Activated CD8-positive, alpha-beta memory T cell treated with anti-CD3 and anti-CD28 coated beads, Interleukin-2, amount 10 ng/mL, durations not matched to agents 7 days and 5 days (primary cell): ENCODE measurements at regions of chr16 and their contacts with region 1.

Region 1: GRCh38 chr16:66830422-66831404 is at the start of gene NAE1:
- DNase-seq: peak; percentile 90
- ATAC-seq: peak; percentile 96
- H3K4me3 Mint-ChIP-seq: peak within 1 kb of the TSS; percentile 71
- H3K27ac Mint-ChIP-seq: peak within 1 kb of the TSS; percentile 71
- H3K4me1 Mint-ChIP-seq: peaks cover 40% of the 10 kb centered on the region
- H3K27me3 Mint-ChIP-seq: no peaks in the 10 kb centered on the region
- total RNA-seq, gene NAE1: 81.1 to 88.5 TPM

Region 2: DNA sequence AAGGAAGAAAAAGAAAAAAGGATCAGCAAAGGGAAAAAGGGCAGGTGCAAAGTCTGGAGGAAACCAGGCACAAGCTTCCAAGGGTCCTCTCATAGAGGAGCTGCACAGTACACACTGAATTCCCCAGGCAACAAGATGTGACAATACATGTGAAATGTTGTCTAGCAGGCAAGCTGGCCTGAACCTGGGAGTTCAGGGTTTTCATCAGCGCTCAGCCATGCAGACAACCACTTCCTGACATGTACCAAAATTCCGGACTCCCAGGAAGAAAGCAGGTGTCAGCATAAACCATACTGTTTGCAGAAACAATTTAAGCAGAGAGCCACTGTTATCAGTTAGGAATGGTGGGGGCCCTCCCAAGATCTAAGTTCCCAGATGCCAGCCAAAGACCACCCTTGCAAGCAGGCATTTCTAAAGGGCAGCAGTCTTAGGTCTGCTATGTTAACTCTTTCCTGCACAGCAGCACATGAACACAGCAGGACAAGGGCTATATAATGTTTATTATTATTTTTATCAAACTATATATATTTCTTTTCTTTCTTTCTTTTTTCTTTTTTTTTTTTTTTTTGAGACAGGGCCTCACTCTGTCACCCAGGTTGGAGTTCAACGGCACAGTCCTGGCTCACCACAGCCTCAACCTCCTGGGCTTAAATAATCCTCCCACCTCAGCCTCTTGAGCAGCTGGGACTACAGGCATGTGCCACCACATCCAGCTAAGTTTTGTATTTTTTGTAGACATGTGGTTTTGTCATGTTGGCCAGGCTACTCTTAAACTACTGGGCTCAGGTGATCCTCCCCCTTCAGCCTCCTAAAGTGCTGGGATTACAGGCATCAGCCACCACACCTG is 290.9 kb before region 1 on chr16:
- CTCF ChIA-PET with region 1: no interaction called
- DNase-seq: no peak
- ATAC-seq: peak; percentile 54
- H3K4me3 Mint-ChIP-seq: peak overlapping the region; percentile 3
- H3K27ac Mint-ChIP-seq: peak overlapping the region; percentile 63
- H3K4me1 Mint-ChIP-seq: peaks cover 16% of the 10 kb centered on the region
- H3K27me3 Mint-ChIP-seq: no peaks in the 10 kb centered on the region

Region 3: DNA sequence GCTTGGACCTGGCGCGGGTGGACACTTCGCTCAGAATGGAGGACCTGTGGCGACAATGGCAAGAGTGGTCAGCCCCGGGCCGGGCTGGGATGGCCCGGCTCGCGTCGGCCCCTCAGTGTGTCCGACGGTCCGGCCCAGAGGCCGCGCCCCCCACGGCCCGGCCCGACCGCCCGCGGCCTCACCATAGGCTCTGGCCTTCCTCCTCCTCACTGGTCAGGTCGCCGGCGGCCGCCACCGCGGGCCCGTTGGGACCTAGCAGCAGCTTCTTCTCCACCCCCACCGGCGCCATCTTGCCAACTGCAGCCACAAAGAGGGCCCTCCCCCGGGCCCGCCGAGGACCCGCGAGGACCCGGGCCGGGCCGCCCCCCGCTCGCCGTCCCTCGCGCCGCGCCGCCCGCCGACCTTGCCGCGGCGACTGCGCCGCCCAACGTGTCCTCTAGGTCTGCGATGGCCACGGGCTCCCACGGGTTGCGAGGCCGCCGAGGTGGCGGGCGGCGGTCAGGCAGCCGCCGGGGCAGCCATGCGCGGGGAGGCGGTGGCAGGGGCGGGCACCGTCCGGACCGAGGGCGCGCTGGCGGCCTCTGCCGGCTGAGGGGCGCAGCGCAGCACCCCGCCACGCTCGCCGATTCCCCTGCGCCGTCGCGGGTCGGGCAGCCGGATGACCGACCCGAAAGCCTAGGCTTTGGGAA is 79.3 kb before region 1 on chr16 and contains the start of gene DYNC1LI2:
- CTCF ChIA-PET with region 1: interaction called, 22 read pairs
- DNase-seq: peak; percentile 86
- ATAC-seq: peak; percentile 87
- H3K4me3 Mint-ChIP-seq: peak within 1 kb of the TSS; percentile 85
- H3K27ac Mint-ChIP-seq: peak within 1 kb of the TSS; percentile 86
- H3K4me1 Mint-ChIP-seq: peaks cover 46% of the 10 kb centered on the region
- H3K27me3 Mint-ChIP-seq: peaks cover 24% of the 10 kb centered on the region
- total RNA-seq, gene DYNC1LI2: 71.6 to 81.0 TPM

Region 4: DNA sequence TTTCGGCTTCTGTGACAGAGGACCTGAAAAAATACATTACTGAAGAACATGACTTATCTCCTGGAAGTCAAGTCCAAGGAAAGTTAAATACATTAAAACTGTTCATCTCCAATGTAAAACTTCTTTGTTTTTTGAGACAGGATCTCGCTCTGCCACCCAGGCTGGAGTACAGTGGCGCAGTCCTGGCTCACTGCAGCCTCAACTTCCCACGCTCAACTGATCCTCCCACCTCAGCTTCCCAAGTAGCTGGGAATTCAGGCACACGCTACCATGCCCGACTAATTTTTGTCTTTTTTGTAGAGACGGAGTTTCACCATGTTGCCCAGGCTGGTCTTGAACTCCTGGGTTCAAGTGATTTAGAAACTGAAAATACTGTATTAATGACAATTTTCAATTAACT is 19.7 kb before region 1 on chr16:
- CTCF ChIA-PET with region 1: interaction called, 42 read pairs
- DNase-seq: no peak
- ATAC-seq: no peak
- H3K4me3 Mint-ChIP-seq: no peak overlapping the region
- H3K27ac Mint-ChIP-seq: no peak overlapping the region
- H3K4me1 Mint-ChIP-seq: no peaks in the 10 kb centered on the region
- H3K27me3 Mint-ChIP-seq: no peaks in the 10 kb centered on the region

Region 5: GRCh38 chr16:66850115-66850815 is 19.6 kb after region 1 on chr16:
- CTCF ChIA-PET with region 1: interaction called, 47 read pairs
- DNase-seq: no peak
- ATAC-seq: no peak
- H3K4me3 Mint-ChIP-seq: no peak overlapping the region
- H3K27ac Mint-ChIP-seq: no peak overlapping the region
- H3K4me1 Mint-ChIP-seq: peaks cover 19% of the 10 kb centered on the region
- H3K27me3 Mint-ChIP-seq: peaks cover 13% of the 10 kb centered on the region

Region 6: DNA sequence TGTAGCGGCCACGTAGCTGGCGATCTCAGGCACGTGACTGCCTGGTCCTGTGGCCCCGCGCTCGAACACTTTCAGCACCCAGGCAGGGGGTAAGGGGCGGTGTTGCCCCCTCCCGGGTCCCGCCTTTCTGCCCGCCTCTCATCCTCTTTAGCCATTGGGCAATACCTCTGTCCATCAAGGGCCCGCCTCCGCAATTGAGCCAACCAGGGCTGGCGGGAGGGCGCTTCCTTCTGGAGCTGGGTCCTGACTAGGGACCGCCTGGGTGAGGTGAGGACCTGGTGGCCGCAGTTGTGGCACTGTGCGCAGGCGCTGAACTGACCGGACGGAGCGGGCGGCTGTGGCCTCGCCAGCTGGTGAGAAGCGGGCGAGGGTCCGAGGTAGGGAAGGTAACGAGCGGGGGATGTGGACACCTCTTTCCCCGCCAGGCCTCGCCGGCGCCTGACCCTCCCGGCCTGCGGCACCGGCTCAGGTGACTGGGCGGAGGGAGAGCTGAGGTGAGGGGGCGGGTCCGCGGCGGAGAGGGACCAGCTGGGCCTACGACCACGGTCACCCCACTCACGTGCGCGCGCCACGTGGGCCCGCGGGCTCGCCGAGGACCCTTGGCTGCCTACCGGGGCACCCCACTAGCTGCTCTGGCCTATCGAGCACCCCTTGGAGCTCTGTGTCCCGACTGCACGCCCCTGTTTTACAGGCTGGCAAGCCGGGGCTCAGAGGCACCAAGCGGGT is 49.7 kb after region 1 on chr16 and contains the start of gene PDP2:
- CTCF ChIA-PET with region 1: interaction called, 63 read pairs
- DNase-seq: peak; percentile 97
- ATAC-seq: peak; percentile 98
- H3K4me3 Mint-ChIP-seq: peak within 1 kb of the TSS; percentile 99
- H3K27ac Mint-ChIP-seq: peak within 1 kb of the TSS; percentile 97
- H3K4me1 Mint-ChIP-seq: peaks cover 65% of the 10 kb centered on the region
- H3K27me3 Mint-ChIP-seq: no peaks in the 10 kb centered on the region
- total RNA-seq, gene PDP2: 29.2 to 33.3 TPM

Region 7: GRCh38 chr16:66924527-66925321 is 94.0 kb after region 1 on chr16:
- CTCF ChIA-PET with region 1: interaction called, 10 read pairs
- DNase-seq: peak; percentile 56
- ATAC-seq: peak; percentile 87
- H3K4me3 Mint-ChIP-seq: peak overlapping the region; percentile 60
- H3K27ac Mint-ChIP-seq: no peak overlapping the region
- H3K4me1 Mint-ChIP-seq: peaks cover 21% of the 10 kb centered on the region
- H3K27me3 Mint-ChIP-seq: peaks cover 46% of the 10 kb centered on the region